ENCODE measurements at regions of chr12 and their contacts with region 1.

Region 1: DNA sequence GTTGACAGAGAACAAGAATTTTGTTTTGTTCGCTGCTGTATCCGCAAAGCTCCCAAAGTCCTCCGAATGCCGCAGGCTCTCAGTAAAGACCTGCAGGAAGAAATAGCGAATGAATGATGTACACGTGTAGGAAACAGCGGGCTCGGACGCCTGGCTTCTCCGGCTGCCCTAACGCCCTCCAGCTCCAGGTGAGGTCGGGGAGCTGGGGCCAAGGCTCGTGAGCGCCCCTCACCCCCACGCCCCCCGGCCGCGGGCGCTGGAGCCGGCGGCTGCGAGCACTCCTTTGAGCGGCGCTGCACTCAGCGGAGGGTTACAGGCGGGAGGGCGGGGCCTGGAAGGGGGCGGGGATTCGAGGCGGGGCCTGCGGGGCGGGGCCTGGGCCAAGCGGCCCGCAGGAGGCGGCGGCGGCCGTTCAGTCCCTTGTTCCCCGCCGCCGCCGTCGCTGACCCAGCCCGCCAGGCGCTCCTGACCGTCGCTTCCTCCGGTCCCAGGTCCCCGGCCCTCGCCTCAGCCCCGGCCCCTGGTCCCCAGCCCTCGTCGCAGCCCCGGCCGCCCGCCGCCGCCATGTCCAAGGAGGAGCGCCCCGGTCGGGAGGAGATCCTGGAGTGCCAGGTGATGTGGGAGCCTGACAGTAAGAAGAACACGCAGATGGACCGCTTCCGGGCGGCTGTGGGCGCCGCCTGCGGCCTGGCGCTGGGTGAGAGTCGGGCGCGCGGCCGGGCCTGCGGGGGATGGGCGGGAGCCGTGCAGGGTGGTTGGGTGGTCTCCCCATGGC is at the start of gene AACS:
- DNase-seq: peak; percentile 66 to 81 (median 69)
- H3K4me3 ChIP-seq: peak within 1 kb of the TSS; percentile 66
- H3K4me3 Mint-ChIP-seq: peak within 1 kb of the TSS; percentile 77 to 91 (median 83)
- H3K27ac ChIP-seq: peak within 1 kb of the TSS; percentile 24
- H3K27ac Mint-ChIP-seq: peak within 1 kb of the TSS; percentile 36 to 88 (median 78)
- H3K4me1 ChIP-seq: peaks cover 10% of the 10 kb centered on the region
- H3K4me1 Mint-ChIP-seq: peaks cover 15 to 25% (median 19%) of the 10 kb centered on the region in 3 donors
- H3K27me3 ChIP-seq: no peaks in the 10 kb centered on the region
- H3K27me3 Mint-ChIP-seq: peaks cover 3 to 7% of the 10 kb centered on the region in 2 donors
- total RNA-seq, gene AACS: 16.1 to 16.7 TPM

Region 2: DNA sequence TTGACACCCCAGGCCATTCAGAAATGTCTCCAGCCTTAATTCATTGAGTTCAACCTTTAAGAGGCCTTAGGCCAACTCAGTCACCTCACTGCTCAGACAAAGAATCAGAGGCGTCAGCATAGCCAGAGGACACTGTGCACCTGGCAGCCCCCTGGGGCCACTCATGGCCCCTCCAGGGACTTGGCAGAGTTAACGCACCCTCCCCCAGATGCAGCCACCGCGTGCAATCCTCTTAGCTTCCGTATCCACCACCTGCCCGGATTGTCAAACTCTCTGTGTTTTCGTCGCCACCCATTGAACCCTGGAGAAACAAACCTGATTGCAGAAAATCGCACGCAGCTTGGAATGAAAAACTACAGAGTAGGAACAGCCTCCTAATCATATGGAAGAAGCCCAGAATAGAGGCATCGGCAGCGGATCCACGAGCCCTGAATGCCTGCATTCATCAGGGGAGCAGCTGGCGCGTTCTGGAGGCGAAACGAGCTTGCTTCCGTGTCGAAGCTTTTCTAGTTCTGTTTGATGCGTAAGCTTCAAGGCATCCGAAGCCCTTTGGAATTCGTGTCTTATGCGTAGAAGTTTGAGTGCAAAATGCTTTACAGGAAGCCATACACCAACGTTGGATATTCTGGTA is 49.4 kb before region 1 on chr12:
- CTCF ChIA-PET with region 1: no interaction called
- POLR2A ChIA-PET with region 1: interaction called, 10 read pairs
- DNase-seq: no peak
- H3K4me3 ChIP-seq: no peak overlapping the region
- H3K4me3 Mint-ChIP-seq: no peak overlapping the region
- H3K27ac ChIP-seq: no peak overlapping the region
- H3K27ac Mint-ChIP-seq: no peak overlapping the region
- H3K4me1 ChIP-seq: no peaks in the 10 kb centered on the region
- H3K4me1 Mint-ChIP-seq: no peaks in the 10 kb centered on the region
- H3K27me3 ChIP-seq: no peaks in the 10 kb centered on the region
- H3K27me3 Mint-ChIP-seq: no peaks in the 10 kb centered on the region

Region 3: GRCh38 chr12:125132698-125133400 is 67.6 kb after region 1 on chr12:
- CTCF ChIA-PET with region 1: no interaction called
- POLR2A ChIA-PET with region 1: no interaction called
- DNase-seq: no peak
- H3K4me3 ChIP-seq: no peak overlapping the region
- H3K4me3 Mint-ChIP-seq: no peak overlapping the region
- H3K27ac ChIP-seq: no peak overlapping the region
- H3K27ac Mint-ChIP-seq: no peak overlapping the region
- H3K4me1 ChIP-seq: no peaks in the 10 kb centered on the region
- H3K4me1 Mint-ChIP-seq: no peaks in the 10 kb centered on the region
- H3K27me3 ChIP-seq: no peaks in the 10 kb centered on the region
- H3K27me3 Mint-ChIP-seq: no peaks in the 10 kb centered on the region

Measured in CD8-positive, alpha-beta memory T cell (primary cell).